Heart right ventricle (tissue), 16 donors: ENCODE measurements at regions of chr12 and their contacts with region 1.

Region 1: DNA sequence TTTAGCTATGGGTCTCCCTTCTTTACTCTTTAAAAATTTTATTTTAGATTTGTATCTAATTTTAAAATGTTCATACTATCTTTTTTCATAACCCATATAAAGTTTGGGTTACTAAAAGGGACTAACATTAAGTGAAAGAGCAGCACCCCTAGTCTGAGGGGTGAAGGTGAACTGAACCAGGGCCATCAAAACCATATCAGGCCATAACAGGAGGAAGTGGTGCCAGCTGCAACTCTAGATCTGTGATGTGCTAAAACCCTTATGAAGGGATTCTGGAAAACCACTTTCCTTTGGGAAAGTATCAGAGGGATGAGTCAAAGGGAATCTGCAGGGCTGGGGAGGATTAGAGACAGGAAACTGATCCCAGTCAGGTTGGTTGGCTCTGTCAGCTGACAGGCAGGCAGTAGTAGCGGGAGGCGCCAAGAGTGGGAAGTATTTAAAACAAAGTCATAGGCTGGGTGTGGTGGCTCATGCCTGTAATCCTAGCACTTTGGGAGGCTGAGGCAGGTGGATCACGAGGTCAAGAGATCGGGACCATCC is 162.5 kb downstream of the PPM1H start:
- DNase-seq: no peak
- ATAC-seq: peak in 1 of 8 donors; percentile 22
- H3K4me3 ChIP-seq: no peak overlapping the region
- H3K27ac ChIP-seq: no peak overlapping the region
- H3K4me1 ChIP-seq: peaks cover 0 to 8% (median 0%) of the 10 kb centered on the region in 9 donors
- H3K27me3 ChIP-seq: no peaks in the 10 kb centered on the region
- CTCF ChIP-seq: no peak

Region 2: GRCh38 chr12:62683776-62684569 is 88.5 kb before region 1 on chr12:
- intact Hi-C with region 1: no loop called
- DNase-seq: peak; percentile 54 to 66
- ATAC-seq: peak; percentile 81 to 93 (median 88)
- H3K4me3 ChIP-seq: peak overlapping the region in 1 of 10 donors; percentile 5
- H3K27ac ChIP-seq: peak overlapping the region; percentile 9 to 86 (median 78)
- H3K4me1 ChIP-seq: peaks cover 0 to 16% (median 10%) of the 10 kb centered on the region in 9 donors
- H3K27me3 ChIP-seq: no peaks in the 10 kb centered on the region
- CTCF ChIP-seq: no peak

Region 3: GRCh38 chr12:62724947-62725447 is 47.5 kb before region 1 on chr12:
- intact Hi-C with region 1: loop called in 1 of 10 experiments (anchors 5 kb)
- DNase-seq: no peak
- ATAC-seq: peak; percentile 25 to 92 (median 71)
- H3K4me3 ChIP-seq: no peak overlapping the region
- H3K27ac ChIP-seq: peak overlapping the region in 3 of 10 donors; percentile 9 to 70 (median 28)
- H3K4me1 ChIP-seq: peaks cover 6 to 50% (median 14%) of the 10 kb centered on the region in 9 donors
- H3K27me3 ChIP-seq: no peaks in the 10 kb centered on the region
- CTCF ChIP-seq: no peak

Region 4: GRCh38 chr12:62744551-62744950 is 27.9 kb before region 1 on chr12:
- intact Hi-C with region 1: loop called in 1 of 10 experiments (anchors 5 kb)
- DNase-seq: peak in 1 of 2 donors; percentile 24
- ATAC-seq: peak; percentile 41 to 80 (median 69)
- H3K4me3 ChIP-seq: no peak overlapping the region
- H3K27ac ChIP-seq: peak overlapping the region in 2 of 10 donors; percentile 1 to 75
- H3K4me1 ChIP-seq: peaks cover 0 to 20% (median 6%) of the 10 kb centered on the region in 9 donors
- H3K27me3 ChIP-seq: no peaks in the 10 kb centered on the region
- CTCF ChIP-seq: no peak